GM10248 (cell line): ENCODE measurements at regions of chr10 and their contacts with region 1.

Region 1: GRCh38 chr10:27504007-27504807 is at the start of gene RAB18:
- DNase-seq: peak; percentile 95
- CTCF ChIP-seq: no peak

Region 2: GRCh38 chr10:27369880-27370279 is 134.3 kb before region 1 on chr10:
- CTCF ChIA-PET with region 1: no interaction called
- POLR2A ChIA-PET with region 1: no interaction called
- DNase-seq: no peak
- CTCF ChIP-seq: no peak

Region 3: DNA sequence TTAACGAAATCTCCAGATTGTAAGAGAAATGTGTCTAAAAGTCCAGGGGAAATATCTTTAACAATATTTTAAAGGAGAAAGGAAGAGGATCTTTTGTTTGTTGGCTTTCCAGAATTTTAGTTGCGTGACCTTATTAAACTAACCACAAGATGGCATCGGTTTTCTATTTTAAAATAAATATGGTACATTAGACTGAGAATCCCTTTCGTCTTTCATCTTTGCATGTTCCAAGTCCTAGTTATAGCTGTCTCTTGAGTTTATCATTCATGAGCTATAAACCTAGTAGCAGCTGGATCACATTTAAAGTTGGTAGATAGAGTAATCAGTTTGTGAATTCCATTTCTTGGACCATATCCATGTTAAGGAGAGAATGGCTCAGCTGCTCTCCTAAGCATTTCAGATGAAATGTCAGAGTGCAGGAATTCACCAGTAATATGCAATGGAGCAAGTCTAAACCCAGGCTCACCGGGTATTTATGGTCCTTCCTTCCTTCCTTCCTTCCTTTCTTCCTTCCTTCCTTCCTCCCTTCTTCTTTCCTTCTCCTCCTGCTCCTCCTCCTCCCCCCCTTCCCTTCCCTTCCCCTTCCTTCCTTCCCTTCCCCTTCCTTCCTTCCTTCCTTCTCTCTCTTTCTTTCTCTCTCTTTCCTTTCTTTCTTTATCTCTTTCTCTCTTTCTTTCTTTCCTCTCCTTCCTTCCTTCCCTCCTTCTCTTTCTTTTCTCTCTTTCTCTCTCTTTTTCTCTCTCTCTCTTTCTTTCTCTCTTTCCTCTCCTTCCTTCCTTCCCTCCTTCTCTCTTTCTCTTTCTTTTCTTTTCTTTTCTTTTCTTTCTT is 57.9 kb before region 1 on chr10:
- CTCF ChIA-PET with region 1: no interaction called
- POLR2A ChIA-PET with region 1: no interaction called
- DNase-seq: peak; percentile 14
- CTCF ChIP-seq: no peak

Region 4: GRCh38 chr10:27518261-27518660 is 14.1 kb after region 1 on chr10:
- CTCF ChIA-PET with region 1: interaction called, 12 read pairs
- POLR2A ChIA-PET with region 1: no interaction called
- DNase-seq: no peak
- CTCF ChIP-seq: no peak

Region 5: DNA sequence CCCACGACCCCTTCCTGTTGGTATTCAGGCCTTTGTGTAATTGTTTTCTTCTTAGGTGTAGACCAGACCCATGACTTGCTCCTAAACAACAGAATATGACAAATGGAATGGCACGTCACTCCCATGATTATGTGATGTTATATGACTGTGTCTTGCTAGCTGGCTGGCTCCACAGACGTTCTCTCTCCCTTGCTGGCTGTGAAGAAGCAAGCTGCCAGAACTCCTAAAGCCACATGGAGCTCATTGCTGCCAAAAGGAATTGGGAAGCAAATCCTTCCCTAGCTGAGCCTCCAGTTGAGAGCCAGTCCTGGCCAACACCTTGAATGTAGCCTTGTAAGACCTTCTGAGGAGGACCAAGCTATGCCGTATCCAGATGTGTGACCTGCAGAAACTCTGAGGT is 74.1 kb after region 1 on chr10:
- CTCF ChIA-PET with region 1: no interaction called
- POLR2A ChIA-PET with region 1: no interaction called
- DNase-seq: no peak
- CTCF ChIP-seq: no peak